ENCODE measurements at regions of chr12 and their contacts with region 1.

Region 1: DNA sequence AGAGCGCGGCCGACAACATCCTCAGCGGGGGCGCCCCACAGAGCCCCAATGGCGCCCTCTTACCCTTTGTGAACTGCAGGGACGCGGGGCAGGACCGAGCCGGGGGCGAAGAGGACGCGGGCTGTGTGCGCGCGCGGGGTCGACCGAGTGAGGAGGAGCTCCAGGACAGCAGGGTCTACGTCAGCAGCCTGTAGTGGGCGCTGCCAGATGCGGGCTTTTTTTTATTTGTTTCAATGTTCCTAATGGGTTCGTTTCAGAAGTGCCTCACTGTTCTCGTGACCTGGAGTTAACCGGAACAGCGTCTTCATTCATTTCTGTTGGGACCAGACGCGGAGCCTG is 103.8 kb upstream of the FKBP4 start:
- DNase-seq: peak; percentile 74
- ATAC-seq: peak; percentile 78
- H3K4me3 Mint-ChIP-seq: peak overlapping the region; percentile 82
- H3K27ac Mint-ChIP-seq: peak overlapping the region; percentile 93
- H3K4me1 Mint-ChIP-seq: peaks cover 28% of the 10 kb centered on the region
- H3K27me3 Mint-ChIP-seq: peaks cover 8% of the 10 kb centered on the region

Region 2: DNA sequence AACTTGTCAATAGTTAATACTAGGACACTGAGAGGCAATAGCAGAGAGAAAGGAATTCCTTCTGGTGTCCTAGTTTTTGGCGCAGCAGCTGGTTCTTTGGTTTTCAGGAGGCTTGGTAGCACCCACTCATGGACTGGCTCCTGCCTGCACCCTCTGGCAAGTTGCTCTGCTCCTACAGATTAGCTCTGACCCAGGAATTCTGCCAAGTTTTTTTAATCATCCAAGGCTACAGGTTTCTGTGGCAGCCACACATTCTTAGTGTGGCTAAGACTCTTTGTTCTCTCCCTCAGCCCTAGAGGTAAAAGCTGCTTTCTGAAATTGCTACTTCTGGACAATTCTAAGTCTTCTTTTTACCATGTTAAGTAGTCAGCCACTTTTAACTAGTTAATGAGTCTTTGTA is 31.8 kb after region 1 on chr12:
- POLR2A ChIA-PET with region 1: no interaction called
- DNase-seq: no peak
- ATAC-seq: no peak
- H3K4me3 Mint-ChIP-seq: no peak overlapping the region
- H3K27ac Mint-ChIP-seq: no peak overlapping the region
- H3K4me1 Mint-ChIP-seq: no peaks in the 10 kb centered on the region
- H3K27me3 Mint-ChIP-seq: peaks cover 23% of the 10 kb centered on the region

Region 3: GRCh38 chr12:2733477-2734355 is 42.7 kb after region 1 on chr12:
- POLR2A ChIA-PET with region 1: interaction called, 16 read pairs
- DNase-seq: no peak
- ATAC-seq: no peak
- H3K4me3 Mint-ChIP-seq: no peak overlapping the region
- H3K27ac Mint-ChIP-seq: no peak overlapping the region
- H3K4me1 Mint-ChIP-seq: peaks cover 19% of the 10 kb centered on the region
- H3K27me3 Mint-ChIP-seq: peaks cover 20% of the 10 kb centered on the region

Region 4: DNA sequence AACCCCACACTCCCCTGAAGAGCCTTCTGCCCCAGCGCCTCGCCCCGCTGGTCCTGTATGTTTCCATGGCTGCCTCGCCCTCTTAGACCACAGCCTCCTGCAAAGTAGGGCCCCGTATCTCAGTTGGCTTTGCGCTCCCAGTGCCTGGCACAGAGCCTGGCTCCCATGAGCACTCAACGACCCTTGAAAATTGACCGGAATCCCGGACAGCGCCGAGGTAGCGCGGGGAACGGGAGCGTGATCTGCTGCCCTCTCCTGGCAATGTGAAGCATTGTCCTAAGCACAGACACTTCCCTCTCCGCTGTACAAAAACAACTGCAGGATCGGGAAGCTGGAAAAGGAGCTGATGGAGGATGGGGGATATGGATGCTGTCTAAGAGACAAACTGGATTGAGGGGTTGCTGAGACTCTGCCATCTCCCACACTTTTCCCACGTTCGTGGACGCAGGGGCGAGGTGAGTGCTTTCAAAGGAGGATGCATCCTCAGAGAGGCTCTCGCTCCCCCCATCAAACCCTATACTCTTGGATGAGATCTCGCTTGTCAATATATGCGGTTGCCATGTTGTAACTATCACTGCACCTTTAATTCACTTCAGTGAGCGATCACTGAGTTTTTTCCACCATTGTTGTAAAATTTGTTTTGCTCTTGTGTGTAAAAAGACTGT is 93.1 kb after region 1 on chr12:
- POLR2A ChIA-PET with region 1: interaction called, 11 read pairs
- DNase-seq: peak; percentile 63
- ATAC-seq: peak; percentile 84
- H3K4me3 Mint-ChIP-seq: peak overlapping the region; percentile 72
- H3K27ac Mint-ChIP-seq: no peak overlapping the region
- H3K4me1 Mint-ChIP-seq: peaks cover 9% of the 10 kb centered on the region
- H3K27me3 Mint-ChIP-seq: peaks cover 38% of the 10 kb centered on the region

Region 5: DNA sequence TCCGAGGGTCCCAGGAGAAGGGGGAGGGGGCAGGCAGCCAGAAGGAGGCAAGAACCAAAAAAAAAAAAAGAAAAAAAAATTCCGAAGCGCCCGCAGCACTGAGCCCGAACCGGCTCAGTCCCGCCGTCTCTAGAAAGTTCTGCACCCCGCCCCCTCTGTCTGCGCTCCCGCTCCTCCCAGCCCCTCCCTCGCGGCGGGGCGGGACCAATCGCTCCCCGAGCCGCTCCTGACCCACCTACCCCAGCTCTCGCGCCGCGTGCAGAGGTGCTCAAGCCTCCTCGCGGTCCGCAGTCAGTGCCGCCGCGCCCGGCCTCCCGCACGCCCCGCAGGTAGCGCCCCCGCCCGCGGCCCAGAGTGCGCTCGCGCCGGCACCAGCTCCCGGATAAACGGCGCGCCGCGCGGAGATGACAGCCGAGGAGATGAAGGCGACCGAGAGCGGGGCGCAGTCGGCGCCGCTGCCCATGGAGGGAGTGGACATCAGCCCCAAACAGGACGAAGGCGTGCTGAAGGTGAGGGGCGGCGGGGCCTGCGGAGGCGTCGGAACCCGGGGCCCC is 103.8 kb after region 1 on chr12 and contains the start of gene FKBP4:
- POLR2A ChIA-PET with region 1: interaction called, 31 read pairs
- DNase-seq: peak; percentile 90
- ATAC-seq: peak; percentile 87
- H3K4me3 Mint-ChIP-seq: peak within 1 kb of the TSS; percentile 87
- H3K27ac Mint-ChIP-seq: peak within 1 kb of the TSS; percentile 63
- H3K4me1 Mint-ChIP-seq: peaks cover 30% of the 10 kb centered on the region
- H3K27me3 Mint-ChIP-seq: peaks cover 7% of the 10 kb centered on the region
- total RNA-seq, gene FKBP4: 62.3 to 67.7 TPM

Region 6: GRCh38 chr12:2812290-2813213 is 121.6 kb after region 1 on chr12 and contains the start of gene ITFG2:
- POLR2A ChIA-PET with region 1: interaction called, 22 read pairs
- DNase-seq: peak; percentile 92
- ATAC-seq: peak; percentile 93
- H3K4me3 Mint-ChIP-seq: peak within 1 kb of the TSS; percentile 99
- H3K27ac Mint-ChIP-seq: peak within 1 kb of the TSS; percentile 99
- H3K4me1 Mint-ChIP-seq: peaks cover 22% of the 10 kb centered on the region
- H3K27me3 Mint-ChIP-seq: no peaks in the 10 kb centered on the region
- total RNA-seq, gene ITFG2: 66.2 to 66.8 TPM